Left cardiac atrium (tissue), 4 donors: ENCODE measurements at regions of chr13 and their contacts with region 1.

Region 1: DNA sequence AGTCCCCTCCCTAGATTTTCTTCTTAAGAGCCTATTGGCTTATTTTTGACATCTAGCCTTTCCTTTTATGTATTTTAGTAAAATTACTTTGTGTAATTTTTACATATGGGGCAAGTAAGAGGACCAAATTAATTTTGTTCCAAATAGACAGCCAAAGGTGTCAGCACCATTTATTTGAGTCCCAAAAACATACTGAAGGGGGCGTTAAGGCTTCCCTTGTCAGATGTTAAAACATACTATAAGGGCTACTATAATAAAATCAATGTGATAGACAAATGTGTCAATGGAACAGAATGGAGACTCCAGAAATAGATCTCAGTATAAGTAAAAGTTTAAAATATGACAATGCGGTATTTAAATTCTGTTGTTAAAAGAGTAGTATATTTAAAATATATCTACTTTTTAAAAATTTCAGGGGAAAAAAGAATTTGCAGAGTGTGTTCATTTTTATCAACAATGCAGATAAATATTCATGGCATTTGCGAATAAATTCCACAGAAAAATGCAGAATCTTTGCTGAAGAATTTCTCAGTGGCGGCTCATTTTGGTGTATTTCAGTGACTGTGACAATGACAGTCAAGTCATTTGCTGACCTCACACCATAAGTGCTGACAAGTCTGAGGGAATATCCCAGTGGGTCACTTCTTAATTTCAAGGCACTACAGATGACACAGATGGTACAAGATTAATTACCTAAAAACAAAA is 133.7 kb downstream of the MTUS2 start:
- DNase-seq: no peak
- ATAC-seq: no peak

Region 2: GRCh38 chr13:28590461-28590860 is 363.4 kb before region 1 on chr13:
- intact Hi-C with region 1: no loop called
- DNase-seq: no peak
- ATAC-seq: no peak

Region 3: DNA sequence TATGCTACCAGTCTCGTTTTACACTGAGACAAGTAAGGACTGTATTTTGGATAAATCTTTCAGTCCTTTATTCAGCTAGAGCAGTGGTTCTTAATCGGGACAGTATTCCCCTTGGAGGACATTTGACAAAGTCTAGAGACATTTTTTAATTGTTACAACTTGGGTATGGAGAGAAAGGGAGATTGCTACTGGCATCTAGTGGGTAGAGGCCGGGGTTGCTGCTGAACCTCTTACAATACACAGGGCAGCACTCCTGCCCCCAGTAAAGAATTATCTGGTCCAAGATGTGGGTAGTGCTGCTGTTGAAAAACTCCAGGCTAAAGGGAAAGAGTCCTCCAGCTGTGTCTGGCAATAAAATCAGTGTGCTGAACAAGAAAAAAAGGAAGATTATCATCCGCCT is 306.8 kb after region 1 on chr13:
- intact Hi-C with region 1: loop called in 1 of 2 experiments (anchors 10 kb)
- DNase-seq: no peak
- ATAC-seq: peak; percentile 55 to 71